Gastrocnemius medialis (tissue), 4 donors: ENCODE measurements at regions of chr2 and their contacts with region 1.

Region 1: GRCh38 chr2:201171259-201171814 is 11.6 kb upstream of the CASP10 start:
- DNase-seq: no peak
- ATAC-seq: no peak
- H3K4me3 ChIP-seq: no peak overlapping the region
- H3K27ac ChIP-seq: peak overlapping the region in 1 of 4 donors; percentile 23
- H3K4me1 ChIP-seq: no peaks in the 10 kb centered on the region
- H3K27me3 ChIP-seq: no peaks in the 10 kb centered on the region
- CTCF ChIP-seq: no peak
- POLR2A ChIP-seq: no peak

Region 2: GRCh38 chr2:201130524-201131186 is 40.7 kb before region 1 on chr2:
- in situ Hi-C with region 1: no loop called
- intact Hi-C with region 1: loop called (anchors 5 kb)
- DNase-seq: peak; percentile 59 to 60
- ATAC-seq: peak; percentile 76 to 84
- H3K4me3 ChIP-seq: peak overlapping the region; percentile 25 to 95 (median 62)
- H3K27ac ChIP-seq: peak overlapping the region; percentile 95 to 100 (median 98)
- H3K4me1 ChIP-seq: peaks cover 74 to 86% of the 10 kb centered on the region in 2 donors
- H3K27me3 ChIP-seq: no peaks in the 10 kb centered on the region
- CTCF ChIP-seq: no peak
- POLR2A ChIP-seq: peak; percentile 52 to 75